Esophagus muscularis mucosa (tissue), 4 donors: ENCODE measurements at regions of chr9 and their contacts with region 1.

Region 1: GRCh38 chr9:121756474-121757280 is 105.2 kb downstream of the DAB2IP start:
- DNase-seq: no peak
- H3K4me3 ChIP-seq: no peak overlapping the region
- H3K27ac ChIP-seq: peak overlapping the region in 2 of 4 donors; percentile 18 to 29
- H3K4me1 ChIP-seq: peaks cover 59 to 63% (median 62%) of the 10 kb centered on the region in 4 donors
- H3K27me3 ChIP-seq: no peaks in the 10 kb centered on the region
- CTCF ChIP-seq: no peak
- EP300 ChIP-seq: no peak
- POLR2A ChIP-seq: no peak

Region 2: DNA sequence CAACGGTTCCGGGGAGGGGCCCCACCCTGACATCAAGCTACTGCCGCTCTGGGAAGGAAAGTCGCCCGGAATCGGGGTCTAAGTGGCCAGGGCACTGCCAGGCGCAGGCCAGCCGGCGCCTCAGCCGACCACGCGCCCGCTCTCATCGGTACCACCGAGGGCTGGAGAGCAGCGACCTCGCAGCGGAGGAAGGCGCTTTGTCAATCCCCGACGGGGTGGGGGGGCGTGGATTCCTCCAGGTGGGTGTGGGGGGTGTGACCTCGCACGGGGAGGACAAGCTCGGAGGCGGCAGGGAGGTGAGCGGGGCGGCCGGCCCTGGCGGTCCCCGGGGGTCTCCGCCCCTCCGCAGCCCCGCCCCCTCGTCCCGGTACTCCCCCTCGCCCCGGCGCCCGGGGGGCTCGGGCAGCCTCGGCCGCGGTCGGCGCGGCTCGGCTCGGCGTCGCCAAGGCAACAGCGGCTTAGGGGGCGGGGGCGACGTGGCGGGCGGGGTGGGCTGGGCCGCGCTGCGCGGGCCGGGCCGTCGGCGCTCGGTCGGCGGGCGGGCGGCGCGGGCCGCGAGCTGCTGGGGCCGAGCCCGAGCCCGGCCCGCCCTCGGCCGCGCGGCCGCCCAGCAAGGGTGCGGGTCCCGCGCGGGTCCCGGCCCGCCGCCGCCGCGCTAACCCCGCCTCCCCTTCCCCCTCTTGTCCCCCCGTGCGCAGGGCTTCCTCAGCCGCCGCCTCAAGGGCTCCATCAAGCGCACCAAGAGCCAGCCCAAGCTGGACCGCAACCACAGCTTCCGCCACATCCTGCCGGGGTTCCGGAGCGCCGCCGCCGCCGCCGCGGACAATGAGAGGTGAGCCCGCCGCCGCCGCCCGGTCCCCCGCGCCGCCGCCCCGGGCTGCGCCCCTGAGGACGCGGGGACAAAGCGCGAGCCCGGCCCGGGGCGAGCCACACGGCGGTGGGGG is 57.8 kb before region 1 on chr9:
- intact Hi-C with region 1: loop called (anchors 5 kb)
- DNase-seq: no peak
- H3K4me3 ChIP-seq: peak overlapping the region; percentile 55 to 67 (median 64)
- H3K27ac ChIP-seq: peak overlapping the region; percentile 45 to 67 (median 64)
- H3K4me1 ChIP-seq: peaks cover 38 to 53% (median 41%) of the 10 kb centered on the region in 4 donors
- H3K27me3 ChIP-seq: no peaks in the 10 kb centered on the region
- CTCF ChIP-seq: no peak
- EP300 ChIP-seq: no peak
- POLR2A ChIP-seq: no peak